ENCODE measurements at regions of chr6 and their contacts with region 1.

Region 1: DNA sequence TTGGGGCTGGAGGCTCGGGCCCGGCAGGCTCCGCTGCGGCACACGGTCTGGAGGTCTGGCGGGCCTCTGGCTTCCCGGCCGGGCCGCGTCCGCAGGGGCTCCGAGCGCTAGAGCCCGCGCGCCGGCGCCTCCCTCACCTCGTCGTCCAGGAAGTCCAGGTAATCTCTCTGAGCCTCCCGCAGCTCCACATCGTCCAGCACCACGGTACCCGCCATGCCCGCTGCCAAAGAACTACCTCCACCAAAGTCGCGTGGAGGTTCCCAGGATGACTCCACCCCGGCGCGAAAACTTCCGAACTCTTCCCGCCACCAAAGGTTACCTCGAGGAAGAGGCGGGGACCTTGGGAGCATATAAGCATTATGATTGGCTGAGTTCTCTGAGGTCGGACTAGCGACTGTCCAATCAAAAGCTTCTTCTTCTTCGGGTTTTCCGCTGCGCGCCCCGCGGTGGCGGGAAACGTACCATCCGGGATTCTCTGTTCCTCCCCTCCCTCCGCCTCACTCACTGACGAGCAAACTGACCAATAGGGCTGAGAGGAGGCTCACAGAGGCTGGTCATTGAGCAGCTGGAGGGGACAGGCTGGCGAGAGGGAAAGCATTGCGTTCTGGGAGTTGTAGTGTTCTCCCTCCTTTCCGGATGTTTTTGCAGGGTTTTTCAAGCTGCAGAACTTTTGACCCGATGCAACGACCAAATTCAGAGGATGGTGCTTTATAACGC is at the start of gene MCM3:
- DNase-seq: peak; percentile 99
- ATAC-seq: peak; percentile 99
- H3K4me3 ChIP-seq: peak within 1 kb of the TSS; percentile 84 to 93
- H3K27ac ChIP-seq: peak within 1 kb of the TSS; percentile 91
- H3K4me1 ChIP-seq: peaks cover 15% of the 10 kb centered on the region
- H3K27me3 ChIP-seq: no peaks in the 10 kb centered on the region
- CTCF ChIP-seq: no peak
- total RNA-seq, gene MCM3: 107 TPM

Region 2: DNA sequence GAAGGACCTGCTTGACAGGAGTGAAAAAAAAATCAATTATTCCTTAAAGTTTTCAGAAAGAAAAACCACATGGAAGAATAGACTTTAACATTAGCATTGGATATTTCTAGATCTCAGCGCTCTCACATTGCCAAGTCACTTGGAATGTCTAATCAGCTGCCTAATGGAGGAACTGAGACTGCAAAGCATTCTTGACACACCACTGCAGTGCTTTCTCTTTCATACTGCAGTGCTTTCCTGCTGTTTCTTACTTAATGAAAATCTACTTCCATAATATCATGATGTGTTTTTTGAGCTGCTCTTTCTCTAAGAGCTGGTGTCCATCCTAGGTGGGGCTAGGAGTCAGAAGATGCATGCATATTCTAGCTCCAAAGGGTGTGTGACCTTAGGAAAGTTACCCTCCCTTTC is 20.4 kb after region 1 on chr6:
- CTCF ChIA-PET with region 1: interaction called, 12 read pairs
- POLR2A ChIA-PET with region 1: no interaction called
- in situ Hi-C with region 1: no loop called
- intact Hi-C with region 1: no loop called
- DNase-seq: no peak
- ATAC-seq: no peak
- H3K4me3 ChIP-seq: no peak overlapping the region
- H3K27ac ChIP-seq: no peak overlapping the region
- H3K4me1 ChIP-seq: no peaks in the 10 kb centered on the region
- H3K27me3 ChIP-seq: no peaks in the 10 kb centered on the region
- CTCF ChIP-seq: no peak

Region 3: DNA sequence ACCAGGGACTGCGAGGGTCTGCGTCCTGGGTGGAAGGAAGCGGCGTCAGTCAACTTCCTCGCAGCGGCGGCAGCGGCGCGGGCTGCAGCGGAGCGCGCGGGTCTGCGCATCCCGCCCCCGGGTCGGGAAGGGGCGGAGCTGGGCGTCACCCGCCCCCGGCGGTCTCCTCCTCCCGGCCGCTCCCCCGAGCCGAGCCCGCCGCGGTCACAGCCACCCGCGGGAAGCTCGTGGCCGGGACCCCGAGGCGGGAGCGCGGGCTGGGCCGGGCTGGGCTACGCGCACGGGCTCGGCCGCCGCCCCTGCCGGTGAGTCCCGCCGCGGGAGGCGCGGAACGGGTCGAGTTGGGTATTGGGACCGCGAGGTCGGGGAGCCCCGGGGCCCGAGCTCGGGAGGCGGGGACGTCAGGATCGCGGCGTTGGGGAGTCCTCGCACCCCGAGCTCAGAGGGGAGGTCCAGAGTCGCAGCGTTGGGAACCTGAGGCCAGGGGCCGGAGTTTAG is 77.4 kb after region 1 on chr6 and contains the start of gene PAQR8:
- CTCF ChIA-PET with region 1: no interaction called
- POLR2A ChIA-PET with region 1: no interaction called
- in situ Hi-C with region 1: no loop called
- intact Hi-C with region 1: loop called (anchors 2 kb)
- DNase-seq: no peak
- ATAC-seq: peak; percentile 96
- H3K4me3 ChIP-seq: peak within 1 kb of the TSS; percentile 77 to 81
- H3K27ac ChIP-seq: peak within 1 kb of the TSS; percentile 73
- H3K4me1 ChIP-seq: peaks cover 8% of the 10 kb centered on the region
- H3K27me3 ChIP-seq: no peaks in the 10 kb centered on the region; the same call in 1 of the 2 replicates
- CTCF ChIP-seq: no peak
- total RNA-seq, gene PAQR8: 3.6 TPM

Region 4: DNA sequence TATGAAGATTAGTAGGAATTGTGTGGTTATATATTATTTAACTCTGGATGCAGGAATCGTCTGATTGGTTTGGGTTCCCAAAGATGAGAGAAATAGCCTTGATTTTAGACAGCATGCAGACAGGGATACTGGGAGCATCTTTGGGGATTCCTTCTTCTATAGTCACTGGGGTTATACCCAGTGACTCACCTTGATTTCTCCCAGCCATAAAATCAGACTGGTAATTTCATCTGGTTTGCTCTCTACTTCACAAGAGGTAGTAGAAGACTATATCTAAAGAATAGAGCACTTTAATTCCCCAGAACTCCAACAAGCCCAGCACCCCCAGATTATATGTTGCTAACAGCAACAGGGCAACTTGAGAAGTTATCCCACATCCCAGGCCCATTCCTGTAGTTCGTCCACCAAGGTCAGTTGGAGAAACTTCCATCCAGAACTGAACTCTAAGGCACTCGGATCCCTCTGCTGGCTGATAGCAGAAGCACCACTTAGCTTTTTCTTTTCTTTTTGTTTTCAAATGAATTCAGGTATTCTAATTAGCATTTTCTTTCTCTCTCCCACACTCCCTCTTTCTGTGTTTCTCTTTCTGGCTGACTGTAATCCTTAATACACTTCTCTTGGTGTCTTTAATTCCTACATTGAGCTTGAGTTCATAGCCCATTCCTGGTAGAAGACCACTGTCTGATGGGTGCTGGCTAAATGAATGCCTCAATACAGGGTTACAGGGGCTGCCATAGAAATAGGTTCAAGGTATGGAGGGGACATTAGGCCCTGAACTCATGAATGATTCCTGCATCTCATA is 115.1 kb after region 1 on chr6:
- CTCF ChIA-PET with region 1: interaction called, 10 read pairs
- POLR2A ChIA-PET with region 1: no interaction called
- in situ Hi-C with region 1: loop called (anchors 10 kb)
- intact Hi-C with region 1: loop called (anchors 1 kb)
- DNase-seq: no peak
- ATAC-seq: peak; percentile 91
- H3K4me3 ChIP-seq: no peak overlapping the region
- H3K27ac ChIP-seq: no peak overlapping the region
- H3K4me1 ChIP-seq: no peaks in the 10 kb centered on the region; the same call in 1 of the 2 replicates
- H3K27me3 ChIP-seq: no peaks in the 10 kb centered on the region
- CTCF ChIP-seq: peak; percentile 90

Region 5: GRCh38 chr6:52664186-52664990 is 379.8 kb after region 1 on chr6:
- CTCF ChIA-PET with region 1: interaction called, 7 read pairs
- POLR2A ChIA-PET with region 1: no interaction called
- in situ Hi-C with region 1: no loop called
- intact Hi-C with region 1: loop called (anchors 10 kb)
- DNase-seq: peak; percentile 80
- ATAC-seq: peak; percentile 97
- H3K4me3 ChIP-seq: peak overlapping the region; percentile 82 to 84
- H3K27ac ChIP-seq: peak overlapping the region; percentile 92
- H3K4me1 ChIP-seq: peaks cover 17% of the 10 kb centered on the region
- H3K27me3 ChIP-seq: no peaks in the 10 kb centered on the region
- CTCF ChIP-seq: no peak

Measured in Panc1 (cell line).